Cardiac septum (tissue), 1 donor: ENCODE measurements at regions of chr19 and their contacts with region 1.

Region 1: DNA sequence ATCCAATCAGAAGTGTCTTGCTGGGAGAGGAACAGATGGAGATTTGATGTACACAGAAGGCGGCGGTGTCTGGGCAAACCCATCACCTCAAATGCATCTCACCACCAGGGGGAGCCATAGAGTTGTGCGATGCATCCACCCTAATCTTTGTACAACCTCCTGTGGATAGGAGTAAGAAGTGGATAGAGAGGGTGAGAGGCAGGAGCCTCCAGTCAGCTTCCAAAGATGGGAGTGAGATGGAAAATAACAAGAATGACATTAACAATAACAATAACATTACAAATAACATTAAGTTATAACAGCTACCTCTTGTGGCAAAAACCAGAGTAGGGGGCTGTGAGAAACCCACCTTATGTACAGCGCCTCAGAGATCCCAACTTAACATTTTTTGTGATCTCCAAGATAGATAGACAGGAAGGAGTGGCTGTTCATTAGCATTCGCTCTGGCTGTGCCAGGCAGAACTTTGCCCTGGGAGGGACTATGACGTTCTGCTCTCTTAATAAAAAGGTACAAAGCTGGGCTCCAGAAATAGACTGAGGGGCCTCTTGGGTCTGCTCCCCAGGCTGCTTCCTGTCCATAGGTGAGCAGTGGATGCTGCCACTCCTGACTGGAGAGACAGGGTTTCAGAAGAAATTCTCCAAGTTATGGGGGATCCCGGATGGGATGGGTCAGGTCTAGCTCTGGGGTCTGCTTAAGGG is 5.2 kb upstream of the CEACAM18 start:
- DNase-seq: no peak

Region 2: GRCh38 chr19:51660975-51661600 is 187.9 kb after region 1 on chr19:
- intact Hi-C with region 1: loop called (anchors 2 kb)
- DNase-seq: peak; percentile 88